ENCODE measurements at regions of chr12 and their contacts with region 1.

Region 1: GRCh38 chr12:111405149-111405860 is 418 bp upstream of the SH2B3 start:
- DNase-seq: peak; percentile 100
- ATAC-seq: peak; percentile 77
- H3K4me3 Mint-ChIP-seq: peak overlapping the region; percentile 76
- H3K27ac Mint-ChIP-seq: peak overlapping the region; percentile 96
- H3K4me1 Mint-ChIP-seq: peaks cover 51% of the 10 kb centered on the region
- H3K27me3 Mint-ChIP-seq: no peaks in the 10 kb centered on the region

Region 2: DNA sequence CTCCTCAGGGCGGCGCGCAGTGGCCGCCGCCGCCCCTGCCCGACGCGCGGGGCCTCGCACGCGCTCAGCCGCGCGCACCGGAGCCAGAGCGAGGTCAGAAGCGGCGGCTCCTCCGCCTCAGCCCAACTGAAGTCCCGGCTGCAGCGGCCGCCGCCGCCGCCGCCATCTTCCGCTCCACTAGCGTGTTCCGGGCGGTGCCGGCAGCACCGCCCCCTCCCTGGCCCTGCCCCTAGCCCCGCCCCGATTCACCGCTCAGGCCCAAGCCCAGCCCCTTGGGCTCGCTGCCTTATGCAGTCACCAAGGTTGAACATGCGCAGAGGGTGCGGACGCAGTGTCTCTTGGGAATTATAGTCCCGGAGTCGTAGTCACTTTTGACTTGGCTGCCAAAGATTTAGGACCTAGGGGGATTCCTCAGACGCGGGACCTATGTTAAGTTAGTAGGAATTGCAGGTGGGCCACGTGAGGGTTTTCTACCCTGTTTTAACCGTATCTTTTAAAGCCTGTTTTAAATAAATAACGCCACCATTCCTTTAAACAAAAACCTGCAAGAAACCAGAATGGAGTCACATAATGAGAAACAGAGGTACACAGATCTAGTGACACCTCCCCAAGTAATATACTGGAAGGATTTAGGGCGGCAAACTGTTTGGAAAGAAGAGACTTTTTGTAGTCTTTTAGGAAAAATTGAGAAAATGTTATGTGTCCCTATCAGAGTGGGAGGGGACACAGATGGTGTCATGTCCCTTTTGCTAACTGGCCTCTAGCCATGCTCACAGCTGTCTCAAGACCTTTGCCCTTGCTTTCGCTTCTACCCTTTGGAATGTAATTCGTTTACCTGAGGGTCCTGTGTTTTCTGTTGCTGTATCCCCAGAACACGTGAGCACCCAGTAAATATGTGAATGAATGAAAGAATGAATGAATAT is 821.9 kb before region 1 on chr12 and contains the start of gene PPTC7:
- CTCF ChIA-PET with region 1: no interaction called
- POLR2A ChIA-PET with region 1: no interaction called
- intact Hi-C with region 1: loop called in 1 of 2 experiments (anchors 5 kb)
- DNase-seq: peak; percentile 99
- ATAC-seq: peak; percentile 86
- H3K4me3 Mint-ChIP-seq: peak within 1 kb of the TSS; percentile 91
- H3K27ac Mint-ChIP-seq: peak within 1 kb of the TSS; percentile 99
- H3K4me1 Mint-ChIP-seq: peaks cover 59% of the 10 kb centered on the region
- H3K27me3 Mint-ChIP-seq: no peaks in the 10 kb centered on the region
- total RNA-seq, gene PPTC7: 33.4 to 36.5 TPM

Region 3: GRCh38 chr12:111444925-111445725 is 39.8 kb after region 1 on chr12:
- CTCF ChIA-PET with region 1: interaction called, 890 read pairs
- POLR2A ChIA-PET with region 1: interaction called, 6 read pairs
- intact Hi-C with region 1: loop called (anchors 1 kb)
- DNase-seq: peak; percentile 95
- ATAC-seq: peak; percentile 94
- H3K4me3 Mint-ChIP-seq: peak overlapping the region; percentile 17
- H3K27ac Mint-ChIP-seq: peak overlapping the region; percentile 70
- H3K4me1 Mint-ChIP-seq: peaks cover 63% of the 10 kb centered on the region
- H3K27me3 Mint-ChIP-seq: no peaks in the 10 kb centered on the region

Region 4: GRCh38 chr12:111599459-111600204 is 194.3 kb after region 1 on chr12:
- CTCF ChIA-PET with region 1: no interaction called
- POLR2A ChIA-PET with region 1: no interaction called
- intact Hi-C with region 1: loop called (anchors 1 kb)
- DNase-seq: peak; percentile 91
- ATAC-seq: peak; percentile 83
- H3K4me3 Mint-ChIP-seq: peak overlapping the region; percentile 81
- H3K27ac Mint-ChIP-seq: peak overlapping the region; percentile 92
- H3K4me1 Mint-ChIP-seq: peaks cover 17% of the 10 kb centered on the region
- H3K27me3 Mint-ChIP-seq: no peaks in the 10 kb centered on the region

Region 5: GRCh38 chr12:112005419-112006395 is 600.4 kb after region 1 on chr12:
- CTCF ChIA-PET with region 1: no interaction called
- POLR2A ChIA-PET with region 1: no interaction called
- intact Hi-C with region 1: loop called in 1 of 2 experiments (anchors 2 kb)
- DNase-seq: no peak
- ATAC-seq: no peak
- H3K4me3 Mint-ChIP-seq: no peak overlapping the region
- H3K27ac Mint-ChIP-seq: no peak overlapping the region
- H3K4me1 Mint-ChIP-seq: peaks cover 54% of the 10 kb centered on the region
- H3K27me3 Mint-ChIP-seq: no peaks in the 10 kb centered on the region

Region 6: GRCh38 chr12:112418608-112419298 is 1013.4 kb after region 1 on chr12 and contains the start of gene PTPN11:
- CTCF ChIA-PET with region 1: no interaction called
- POLR2A ChIA-PET with region 1: no interaction called
- intact Hi-C with region 1: loop called in 1 of 2 experiments (anchors 10 kb)
- DNase-seq: peak; percentile 95
- ATAC-seq: peak; percentile 78
- H3K4me3 Mint-ChIP-seq: peak within 1 kb of the TSS; percentile 97
- H3K27ac Mint-ChIP-seq: peak within 1 kb of the TSS; percentile 97
- H3K4me1 Mint-ChIP-seq: peaks cover 40% of the 10 kb centered on the region
- H3K27me3 Mint-ChIP-seq: no peaks in the 10 kb centered on the region
- total RNA-seq, gene PTPN11: 129 to 134 TPM